ENCODE measurements at regions of chr14 and their contacts with region 1.

Region 1: GRCh38 chr14:105351920-105352851 is 37.6 kb downstream of the PACS2 start:
- DNase-seq: peak; percentile 93
- ATAC-seq: peak; percentile 96
- H3K4me3 Mint-ChIP-seq: no peak overlapping the region
- H3K27ac Mint-ChIP-seq: no peak overlapping the region
- H3K4me1 Mint-ChIP-seq: peaks cover 2% of the 10 kb centered on the region
- H3K27me3 Mint-ChIP-seq: no peaks in the 10 kb centered on the region

Region 2: DNA sequence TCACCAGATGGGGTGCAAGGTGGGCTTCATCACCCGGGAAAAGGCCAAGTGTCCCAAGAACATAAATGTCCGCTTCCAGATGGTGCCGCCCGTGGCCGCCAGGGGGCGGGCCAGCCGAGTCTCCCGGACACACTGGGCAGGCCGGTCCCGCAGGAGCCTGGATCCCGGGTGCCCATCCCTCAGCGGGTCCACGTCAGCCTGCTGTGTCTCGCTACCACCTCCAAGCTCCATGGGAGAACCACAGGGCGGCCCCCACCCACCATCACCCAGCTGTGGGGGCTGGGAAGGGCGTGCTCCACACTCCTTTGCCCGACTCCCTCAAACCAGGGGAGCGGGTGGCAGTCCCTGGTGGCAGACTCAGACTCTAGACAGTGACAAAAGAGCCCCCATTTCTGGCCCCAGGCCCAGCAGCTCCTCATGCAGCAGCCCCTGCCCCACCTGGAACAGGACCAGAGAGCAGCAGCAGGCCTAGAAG is 149.1 kb before region 1 on chr14:
- CTCF ChIA-PET with region 1: interaction called, 15 read pairs
- DNase-seq: peak; percentile 69
- ATAC-seq: peak; percentile 66
- H3K4me3 Mint-ChIP-seq: no peak overlapping the region
- H3K27ac Mint-ChIP-seq: no peak overlapping the region
- H3K4me1 Mint-ChIP-seq: peaks cover 15% of the 10 kb centered on the region
- H3K27me3 Mint-ChIP-seq: peaks cover 7% of the 10 kb centered on the region

Region 3: DNA sequence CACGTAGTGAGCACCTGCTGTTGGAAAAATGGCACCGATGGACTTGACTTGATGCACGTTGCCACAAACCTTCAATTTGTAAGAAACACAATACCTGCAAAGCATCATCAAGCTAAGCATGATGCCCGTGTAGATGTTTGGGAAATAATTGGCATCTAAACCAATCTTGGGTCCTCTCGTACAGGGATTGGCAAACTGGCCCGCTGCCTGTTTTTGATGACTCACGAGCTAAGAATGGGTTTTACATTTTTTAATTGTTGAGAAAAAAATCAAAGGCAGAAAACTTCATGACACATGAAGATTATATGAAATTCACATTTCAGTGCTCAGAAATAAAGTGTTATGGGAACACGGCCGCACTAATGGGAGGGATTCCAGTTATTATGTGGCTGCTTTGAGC is 78.3 kb after region 1 on chr14:
- CTCF ChIA-PET with region 1: no interaction called
- DNase-seq: no peak
- ATAC-seq: no peak
- H3K4me3 Mint-ChIP-seq: no peak overlapping the region
- H3K27ac Mint-ChIP-seq: no peak overlapping the region
- H3K4me1 Mint-ChIP-seq: peaks cover 19% of the 10 kb centered on the region
- H3K27me3 Mint-ChIP-seq: no peaks in the 10 kb centered on the region

Measured in activated CD8-positive, alpha-beta memory T cell treated with anti-CD3 and anti-CD28 coated beads, Interleukin-2, amount 10 ng/mL, durations not matched to agents 7 days and 5 days (primary cell).